ENCODE measurements at regions of chr13 and their contacts with region 1.

Region 1: GRCh38 chr13:114314074-114314912 is at the start of gene CHAMP1:
- DNase-seq: peak; percentile 93
- ATAC-seq: peak; percentile 82
- H3K4me3 ChIP-seq: peak within 1 kb of the TSS; percentile 94
- H3K27ac ChIP-seq: peak within 1 kb of the TSS; percentile 26
- H3K4me1 ChIP-seq: peaks cover 31% of the 10 kb centered on the region
- H3K27me3 ChIP-seq: no peaks in the 10 kb centered on the region
- CTCF ChIP-seq: no peak
- total RNA-seq, gene CHAMP1: 8.3 and 10.6 TPM in 2 replicates

Region 2: DNA sequence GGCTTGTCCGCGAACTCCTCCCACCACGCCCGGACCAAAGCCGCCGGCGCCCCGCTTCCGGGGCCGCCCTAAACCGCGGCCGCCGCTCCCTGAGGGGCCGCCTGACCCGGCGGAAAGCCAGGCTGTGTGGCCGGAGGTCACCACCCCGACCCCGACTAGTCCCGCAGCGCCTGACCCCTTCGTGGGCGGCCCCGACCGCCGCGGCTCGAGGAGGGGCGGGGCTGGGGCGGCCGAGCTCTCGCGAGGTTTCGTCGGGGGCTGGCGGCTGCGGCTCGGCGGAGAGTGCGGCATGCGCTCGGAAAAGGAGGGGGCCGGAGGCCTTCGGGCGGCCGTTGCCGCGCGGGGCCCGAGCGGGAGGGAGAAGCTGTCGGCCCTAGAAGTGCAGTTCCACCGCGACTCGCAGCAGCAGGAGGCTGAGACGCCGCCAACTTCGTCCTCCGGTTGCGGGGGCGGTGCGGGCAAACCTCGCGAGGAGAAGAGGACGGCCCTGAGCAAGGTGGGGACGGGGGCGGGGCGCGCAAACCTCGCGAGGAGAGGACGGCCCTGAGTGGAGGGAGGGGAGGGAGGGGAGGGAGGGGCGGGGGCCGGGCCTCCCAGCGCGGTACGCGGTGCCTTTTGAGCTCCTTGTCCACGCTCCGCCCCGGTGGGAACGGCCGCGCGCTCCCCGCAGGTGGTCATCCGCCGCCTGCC is 32.8 kb before region 1 on chr13 and contains the start of gene UPF3A:
- CTCF ChIA-PET with region 1: no interaction called
- POLR2A ChIA-PET with region 1: no interaction called
- intact Hi-C with region 1: loop called (anchors 2 kb)
- DNase-seq: peak; percentile 71
- ATAC-seq: peak; percentile 77
- H3K4me3 ChIP-seq: peak within 1 kb of the TSS; percentile 86
- H3K27ac ChIP-seq: peak within 1 kb of the TSS; percentile 94
- H3K4me1 ChIP-seq: peaks cover 13% of the 10 kb centered on the region
- H3K27me3 ChIP-seq: no peaks in the 10 kb centered on the region
- CTCF ChIP-seq: no peak
- total RNA-seq, gene UPF3A: 17.4 and 18.1 TPM in 2 replicates